ENCODE measurements at regions of chr2 and their contacts with region 1.

Region 1: GRCh38 chr2:165293440-165294353 is 54.5 kb downstream of the SCN2A start:
- DNase-seq: peak; percentile 38 to 67 (median 64)
- H3K4me3 ChIP-seq: no peak overlapping the region
- H3K27ac ChIP-seq: no peak overlapping the region
- H3K4me1 ChIP-seq: peaks cover 0 to 4% of the 10 kb centered on the region in 2 donors
- H3K27me3 ChIP-seq: no peaks in the 10 kb centered on the region
- CTCF ChIP-seq: peak; percentile 54 to 74 (median 70)
- POLR2A ChIP-seq: no peak

Region 2: DNA sequence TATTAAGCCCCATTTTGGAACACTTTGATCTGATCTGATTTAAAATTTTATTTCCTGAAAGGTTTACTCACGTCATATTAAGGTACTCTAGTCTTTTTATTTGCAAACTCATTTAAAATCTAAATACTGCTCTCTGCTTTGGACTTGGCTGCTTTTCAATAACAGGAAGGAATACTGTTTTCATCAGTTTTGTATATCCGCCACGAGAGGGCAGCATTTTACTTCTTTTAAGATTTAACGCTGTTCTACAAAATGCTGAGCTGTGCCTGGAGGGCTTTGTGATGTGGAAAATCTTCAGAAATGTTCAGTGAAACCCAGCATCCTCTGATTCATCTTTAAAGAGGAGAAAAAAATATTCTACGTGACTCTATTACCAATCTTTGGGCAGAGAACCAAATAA is 300.9 kb before region 1 on chr2:
- intact Hi-C with region 1: loop called in 1 of 2 experiments (anchors 10 kb)
- DNase-seq: peak; percentile 46 to 79 (median 62)
- H3K4me3 ChIP-seq: no peak overlapping the region
- H3K27ac ChIP-seq: no peak overlapping the region
- H3K4me1 ChIP-seq: peaks cover 0 to 3% of the 10 kb centered on the region in 2 donors
- H3K27me3 ChIP-seq: no peaks in the 10 kb centered on the region
- CTCF ChIP-seq: peak; percentile 23 to 63 (median 53)
- POLR2A ChIP-seq: no peak

Region 3: DNA sequence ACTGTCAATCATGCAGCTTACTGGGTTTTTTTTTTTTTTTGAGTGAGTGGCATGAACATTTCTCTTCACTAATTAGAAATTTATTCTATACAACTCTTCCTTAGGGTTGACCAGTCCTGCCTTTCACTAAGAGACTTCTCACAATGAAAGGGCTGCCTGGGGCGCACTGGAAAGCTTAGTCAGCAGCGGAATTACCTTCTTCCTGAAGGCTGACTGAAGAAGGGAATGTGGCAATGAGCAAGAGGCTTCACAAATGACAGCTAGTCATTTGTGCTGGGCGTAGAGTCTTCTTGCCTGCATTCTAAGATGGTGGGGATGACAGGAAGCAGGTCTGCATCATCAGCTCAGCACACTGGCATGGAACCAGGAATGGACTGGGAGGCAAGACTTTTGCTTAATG is 74.2 kb before region 1 on chr2:
- intact Hi-C with region 1: no loop called
- DNase-seq: no peak
- H3K4me3 ChIP-seq: no peak overlapping the region
- H3K27ac ChIP-seq: no peak overlapping the region
- H3K4me1 ChIP-seq: no peaks in the 10 kb centered on the region
- H3K27me3 ChIP-seq: no peaks in the 10 kb centered on the region
- CTCF ChIP-seq: no peak
- POLR2A ChIP-seq: no peak

Region 4: GRCh38 chr2:165239856-165240515 is 53.7 kb before region 1 on chr2:
- intact Hi-C with region 1: loop called (anchors 10 kb)
- DNase-seq: no peak
- H3K4me3 ChIP-seq: no peak overlapping the region
- H3K27ac ChIP-seq: peak overlapping the region in 1 of 5 donors; percentile 26
- H3K4me1 ChIP-seq: no peaks in the 10 kb centered on the region
- H3K27me3 ChIP-seq: no peaks in the 10 kb centered on the region
- CTCF ChIP-seq: no peak
- POLR2A ChIP-seq: no peak